Naive thymus-derived CD4-positive, alpha-beta T cell (primary cell): ENCODE measurements at regions of chrX and their contacts with region 1.

Region 1: GRCh38 chrX:132004708-132005107 is 18.4 kb upstream of the STK26 start:
- DNase-seq: no peak
- ATAC-seq: no peak
- H3K4me3 ChIP-seq: no peak overlapping the region
- H3K4me3 Mint-ChIP-seq: no peak overlapping the region
- H3K27ac ChIP-seq: no peak overlapping the region
- H3K27ac Mint-ChIP-seq: no peak overlapping the region
- H3K4me1 ChIP-seq: no peaks in the 10 kb centered on the region
- H3K4me1 Mint-ChIP-seq: peaks cover 8 to 32% (median 25%) of the 10 kb centered on the region in 7 donors
- H3K27me3 ChIP-seq: no peaks in the 10 kb centered on the region
- H3K27me3 Mint-ChIP-seq: peaks cover 0 to 2% (median 0%) of the 10 kb centered on the region in 5 donors

Region 2: GRCh38 chrX:131970347-131970746 is 34.4 kb before region 1 on chrX:
- CTCF ChIA-PET with region 1: no interaction called
- POLR2A ChIA-PET with region 1: no interaction called
- intact Hi-C with region 1: loop called in 1 of 2 experiments (anchors 5 kb)
- DNase-seq: no peak
- ATAC-seq: no peak
- H3K4me3 ChIP-seq: peak overlapping the region; percentile 5
- H3K4me3 Mint-ChIP-seq: peak overlapping the region in 8 of 10 donors; percentile 44 to 82 (median 62)
- H3K27ac ChIP-seq: no peak overlapping the region
- H3K27ac Mint-ChIP-seq: peak overlapping the region in 7 of 9 donors; percentile 56 to 89 (median 79)
- H3K4me1 ChIP-seq: peaks cover 0 to 3% of the 10 kb centered on the region in 2 donors
- H3K4me1 Mint-ChIP-seq: peaks cover 0 to 10% (median 6%) of the 10 kb centered on the region in 7 donors
- H3K27me3 ChIP-seq: no peaks in the 10 kb centered on the region
- H3K27me3 Mint-ChIP-seq: no peaks in the 10 kb centered on the region

Region 3: GRCh38 chrX:132017431-132018185 is 12.9 kb after region 1 on chrX:
- CTCF ChIA-PET with region 1: interaction called, 3 read pairs
- POLR2A ChIA-PET with region 1: interaction called, 5 read pairs
- intact Hi-C with region 1: loop called (anchors 1 to 2 kb)
- DNase-seq: no peak
- ATAC-seq: no peak
- H3K4me3 ChIP-seq: no peak overlapping the region
- H3K4me3 Mint-ChIP-seq: peak overlapping the region in 7 of 10 donors; percentile 25 to 53 (median 39)
- H3K27ac ChIP-seq: no peak overlapping the region
- H3K27ac Mint-ChIP-seq: peak overlapping the region in 7 of 9 donors; percentile 37 to 69 (median 57)
- H3K4me1 ChIP-seq: peaks cover 0 to 6% of the 10 kb centered on the region in 2 donors
- H3K4me1 Mint-ChIP-seq: peaks cover 10 to 44% (median 27%) of the 10 kb centered on the region in 7 donors
- H3K27me3 ChIP-seq: no peaks in the 10 kb centered on the region
- H3K27me3 Mint-ChIP-seq: no peaks in the 10 kb centered on the region

Region 4: DNA sequence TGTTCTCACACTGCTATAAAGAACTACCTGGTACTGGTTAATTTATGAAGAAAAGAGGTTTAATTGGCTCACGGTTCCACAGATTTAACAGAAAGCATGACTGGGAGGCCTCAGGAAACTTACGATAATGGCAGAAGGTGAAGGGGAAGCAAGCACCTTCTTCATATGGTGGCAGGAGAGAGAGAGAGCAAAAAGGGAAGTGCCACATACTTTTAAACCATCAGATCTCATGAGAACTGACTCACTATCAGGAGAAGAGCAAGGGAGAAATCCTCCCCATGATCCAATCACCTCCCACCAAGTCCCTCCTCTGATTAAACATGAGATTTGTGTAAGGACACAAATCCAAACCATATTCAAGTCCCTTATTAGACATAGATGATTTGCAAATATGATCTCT is 226.9 kb after region 1 on chrX:
- CTCF ChIA-PET with region 1: no interaction called
- POLR2A ChIA-PET with region 1: no interaction called
- intact Hi-C with region 1: no loop called
- DNase-seq: no peak
- ATAC-seq: no peak
- H3K4me3 ChIP-seq: no peak overlapping the region
- H3K4me3 Mint-ChIP-seq: no peak overlapping the region
- H3K27ac ChIP-seq: no peak overlapping the region
- H3K27ac Mint-ChIP-seq: no peak overlapping the region
- H3K4me1 ChIP-seq: no peaks in the 10 kb centered on the region
- H3K4me1 Mint-ChIP-seq: peaks cover 5 to 16% (median 9%) of the 10 kb centered on the region in 7 donors
- H3K27me3 ChIP-seq: no peaks in the 10 kb centered on the region
- H3K27me3 Mint-ChIP-seq: no peaks in the 10 kb centered on the region

Region 5: DNA sequence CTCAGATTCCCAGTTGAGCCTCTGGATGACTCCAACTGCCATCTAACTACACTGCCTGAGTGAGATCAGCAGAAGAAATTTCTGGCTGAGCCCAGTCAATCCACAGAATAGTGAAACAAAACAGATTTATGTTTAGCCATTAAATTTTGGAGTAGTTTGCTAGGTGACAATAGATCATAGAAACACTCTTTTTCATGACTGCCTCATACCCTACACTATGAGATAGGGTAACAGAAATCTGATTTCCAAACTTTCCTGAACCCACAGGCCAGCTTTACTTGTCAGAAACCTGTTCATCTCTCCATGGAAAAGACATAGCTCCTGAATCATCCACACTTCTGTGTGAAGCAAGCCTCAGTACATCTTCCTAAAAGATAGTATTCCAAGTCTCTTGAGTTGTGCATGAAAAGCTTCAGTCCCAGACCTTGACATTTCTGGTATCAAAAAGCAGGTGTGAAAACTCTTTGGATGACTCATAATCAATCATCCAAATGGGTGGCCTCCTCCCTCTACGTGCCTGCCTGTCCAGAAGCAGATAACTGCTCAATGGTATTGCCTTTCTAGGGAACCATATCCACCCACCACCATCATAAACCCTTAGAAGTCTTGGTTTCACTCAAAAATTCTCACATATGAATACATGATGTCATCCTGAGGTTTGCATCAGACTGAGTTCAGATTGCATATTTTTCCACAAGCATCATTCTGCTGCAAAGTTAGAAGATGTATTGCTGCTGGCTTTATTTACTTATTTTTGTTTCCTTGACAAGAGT is 262.1 kb after region 1 on chrX:
- CTCF ChIA-PET with region 1: no interaction called
- POLR2A ChIA-PET with region 1: no interaction called
- intact Hi-C with region 1: no loop called
- DNase-seq: no peak
- ATAC-seq: no peak
- H3K4me3 ChIP-seq: no peak overlapping the region
- H3K4me3 Mint-ChIP-seq: no peak overlapping the region
- H3K27ac ChIP-seq: no peak overlapping the region
- H3K27ac Mint-ChIP-seq: no peak overlapping the region
- H3K4me1 ChIP-seq: no peaks in the 10 kb centered on the region
- H3K4me1 Mint-ChIP-seq: peaks cover 0 to 6% (median 0%) of the 10 kb centered on the region in 7 donors
- H3K27me3 ChIP-seq: no peaks in the 10 kb centered on the region
- H3K27me3 Mint-ChIP-seq: no peaks in the 10 kb centered on the region